Activated CD4-positive, alpha-beta T cell treated with anti-CD3 and anti-CD28 coated beads for 36 hours (primary cell): ENCODE measurements at regions of chr1 and their contacts with region 1.

Region 1: GRCh38 chr1:7961216-7962015 is at the start of gene PARK7:
- DNase-seq: peak; percentile 100
- ATAC-seq: peak; percentile 98
- H3K4me3 Mint-ChIP-seq: peak within 1 kb of the TSS; percentile 100
- H3K27ac Mint-ChIP-seq: peak within 1 kb of the TSS; percentile 100
- H3K4me1 Mint-ChIP-seq: peaks cover 49% of the 10 kb centered on the region
- H3K27me3 Mint-ChIP-seq: no peaks in the 10 kb centered on the region
- total RNA-seq, gene PARK7: 294 to 390 TPM

Region 2: GRCh38 chr1:7783826-7784491 is 177.5 kb before region 1 on chr1 and contains the start of gene PER3:
- CTCF ChIA-PET with region 1: no interaction called
- POLR2A ChIA-PET with region 1: no interaction called
- intact Hi-C with region 1: loop called (anchors 1 to 5 kb)
- DNase-seq: peak; percentile 92
- ATAC-seq: peak; percentile 95
- H3K4me3 Mint-ChIP-seq: peak within 1 kb of the TSS; percentile 67
- H3K27ac Mint-ChIP-seq: no peak within 1 kb of the TSS
- H3K4me1 Mint-ChIP-seq: peaks cover 22% of the 10 kb centered on the region
- H3K27me3 Mint-ChIP-seq: no peaks in the 10 kb centered on the region
- total RNA-seq, gene PER3: 2.3 to 2.5 TPM

Region 3: GRCh38 chr1:7942214-7942921 is 19.0 kb before region 1 on chr1:
- CTCF ChIA-PET with region 1: interaction called, 3 read pairs
- POLR2A ChIA-PET with region 1: no interaction called
- intact Hi-C with region 1: loop called in 1 of 2 experiments (anchors 1 kb)
- DNase-seq: peak; percentile 57
- ATAC-seq: peak; percentile 25
- H3K4me3 Mint-ChIP-seq: peak overlapping the region; percentile 66
- H3K27ac Mint-ChIP-seq: peak overlapping the region; percentile 73
- H3K4me1 Mint-ChIP-seq: peaks cover 47% of the 10 kb centered on the region
- H3K27me3 Mint-ChIP-seq: peaks cover 28% of the 10 kb centered on the region

Region 4: DNA sequence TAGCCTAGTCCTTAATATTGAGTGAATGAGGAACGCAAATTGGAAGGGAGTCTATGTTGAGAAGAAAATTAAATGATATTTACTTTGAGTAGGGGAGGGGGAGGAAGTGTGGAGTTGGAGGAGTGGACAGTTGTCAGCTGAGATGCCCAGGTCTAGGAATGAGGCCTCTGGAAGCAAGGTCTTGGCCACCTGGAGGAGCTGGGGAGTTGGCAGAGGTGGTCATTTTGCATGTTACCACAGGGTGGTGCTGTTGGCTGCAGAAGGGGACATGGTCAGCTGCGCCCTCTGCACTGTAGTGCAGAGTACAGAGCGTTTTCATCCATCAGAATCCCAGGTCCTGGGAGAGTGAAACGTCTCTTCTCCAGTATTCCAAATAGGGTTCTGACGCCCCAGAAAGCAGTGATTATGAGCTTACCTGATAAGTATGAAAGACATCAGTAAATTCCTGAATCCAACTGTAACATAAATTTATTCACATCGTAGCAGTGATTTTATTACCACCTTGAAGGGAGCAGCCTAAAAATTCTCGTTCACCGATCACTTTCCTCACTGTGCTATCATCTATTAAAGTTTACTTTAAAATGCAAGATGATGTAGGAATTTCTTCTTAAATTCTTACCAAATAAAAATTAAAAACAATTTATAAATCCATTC is 13.9 kb after region 1 on chr1:
- CTCF ChIA-PET with region 1: interaction called, 21 read pairs
- POLR2A ChIA-PET with region 1: interaction called, 4 read pairs
- intact Hi-C with region 1: no loop called
- DNase-seq: peak; percentile 56
- ATAC-seq: peak; percentile 83
- H3K4me3 Mint-ChIP-seq: no peak overlapping the region
- H3K27ac Mint-ChIP-seq: no peak overlapping the region
- H3K4me1 Mint-ChIP-seq: peaks cover 2% of the 10 kb centered on the region
- H3K27me3 Mint-ChIP-seq: no peaks in the 10 kb centered on the region

Region 5: GRCh38 chr1:8078143-8078671 is 116.8 kb after region 1 on chr1:
- CTCF ChIA-PET with region 1: no interaction called
- POLR2A ChIA-PET with region 1: no interaction called
- intact Hi-C with region 1: no loop called
- DNase-seq: peak; percentile 14
- ATAC-seq: peak; percentile 74
- H3K4me3 Mint-ChIP-seq: no peak overlapping the region
- H3K27ac Mint-ChIP-seq: no peak overlapping the region
- H3K4me1 Mint-ChIP-seq: peaks cover 5% of the 10 kb centered on the region
- H3K27me3 Mint-ChIP-seq: peaks cover 6% of the 10 kb centered on the region

Region 6: GRCh38 chr1:8154621-8155052 is 193.2 kb after region 1 on chr1:
- CTCF ChIA-PET with region 1: no interaction called
- POLR2A ChIA-PET with region 1: no interaction called
- intact Hi-C with region 1: loop called in 1 of 2 experiments (anchors 1 kb)
- DNase-seq: no peak
- ATAC-seq: no peak
- H3K4me3 Mint-ChIP-seq: no peak overlapping the region
- H3K27ac Mint-ChIP-seq: no peak overlapping the region
- H3K4me1 Mint-ChIP-seq: peaks cover 46% of the 10 kb centered on the region
- H3K27me3 Mint-ChIP-seq: peaks cover 10% of the 10 kb centered on the region

Region 7: DNA sequence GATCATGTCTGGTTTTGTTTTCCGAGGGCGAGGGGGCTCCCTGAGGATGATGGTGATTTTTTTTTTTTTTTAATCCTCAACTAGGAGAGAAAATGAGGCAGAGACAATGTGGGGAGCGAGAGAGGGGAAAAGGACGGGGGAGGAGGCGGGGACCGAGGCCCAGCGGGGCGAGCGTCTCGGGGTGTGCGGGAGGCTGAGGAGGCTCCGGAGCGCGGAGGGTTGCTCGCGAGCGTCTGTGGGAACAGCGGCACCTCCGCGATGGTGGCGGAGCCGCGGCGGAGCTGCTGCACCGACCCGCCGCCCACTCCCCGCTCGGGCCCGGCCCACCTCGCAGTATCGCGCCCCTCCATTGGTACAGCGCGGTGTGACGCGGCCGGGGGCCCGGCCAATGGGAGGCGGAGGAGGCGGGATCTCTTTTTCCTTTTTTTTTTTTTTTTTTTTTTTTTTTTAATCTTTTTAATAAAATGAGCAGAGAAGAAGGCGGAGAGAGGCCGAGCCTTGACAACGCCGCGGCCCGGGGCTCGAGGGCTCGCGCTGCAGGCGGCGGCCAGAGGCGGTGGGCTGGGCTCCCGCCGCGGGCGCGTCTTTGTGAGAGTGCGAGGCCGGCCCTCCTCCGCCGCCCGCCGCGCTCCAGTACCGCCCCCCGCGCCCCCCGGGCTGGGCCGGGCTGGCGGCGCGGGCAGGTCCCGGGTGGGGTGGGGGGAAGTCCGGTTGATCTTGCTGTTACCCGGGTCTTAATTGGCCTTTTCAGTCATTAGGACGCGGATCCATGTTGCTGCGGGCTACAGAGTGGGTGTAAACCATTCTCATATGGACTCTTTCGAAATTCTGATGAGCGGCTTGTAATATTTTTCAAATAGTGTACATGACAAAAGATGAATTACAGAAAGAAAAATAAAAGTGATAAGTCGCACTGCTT is 856.2 kb after region 1 on chr1 and contains the start of gene RERE:
- CTCF ChIA-PET with region 1: no interaction called
- POLR2A ChIA-PET with region 1: no interaction called
- intact Hi-C with region 1: loop called in 1 of 2 experiments (anchors 5 kb)
- DNase-seq: peak; percentile 97
- ATAC-seq: peak; percentile 95
- H3K4me3 Mint-ChIP-seq: peak within 1 kb of the TSS; percentile 77
- H3K27ac Mint-ChIP-seq: peak within 1 kb of the TSS; percentile 96
- H3K4me1 Mint-ChIP-seq: peaks cover 44% of the 10 kb centered on the region
- H3K27me3 Mint-ChIP-seq: peaks cover 2% of the 10 kb centered on the region
- total RNA-seq, gene RERE: 57.4 to 71.6 TPM